Activated T-helper 2 cell treated with anti-CD3 and anti-CD28 coated beads, Interferon-gamma antibody, Interleukin-2, Interleukin-4, amounts not matched to agents 10 μg/mL and 5 μg/mL and 100 μg/mL, durations not matched to agents 14 hours and 24 hours and 36 hours (primary cell): ENCODE measurements at regions of chr16 and their contacts with region 1.

Region 1: GRCh38 chr16:78778101-78779004 is 678.9 kb downstream of the WWOX start:
- DNase-seq: peak; percentile 54
- H3K4me3 Mint-ChIP-seq: peak overlapping the region; percentile 58
- H3K27ac Mint-ChIP-seq: peak overlapping the region; percentile 91
- H3K4me1 Mint-ChIP-seq: peaks cover 61% of the 10 kb centered on the region
- H3K27me3 Mint-ChIP-seq: no peaks in the 10 kb centered on the region

Region 2: GRCh38 chr16:78794581-78795250 is 16.4 kb after region 1 on chr16:
- intact Hi-C with region 1: loop called (anchors 1 kb)
- DNase-seq: no peak
- H3K4me3 Mint-ChIP-seq: no peak overlapping the region
- H3K27ac Mint-ChIP-seq: peak overlapping the region; percentile 69
- H3K4me1 Mint-ChIP-seq: peaks cover 33% of the 10 kb centered on the region
- H3K27me3 Mint-ChIP-seq: no peaks in the 10 kb centered on the region

Region 3: GRCh38 chr16:78892951-78893733 is 114.8 kb after region 1 on chr16:
- intact Hi-C with region 1: loop called (anchors 1 kb)
- DNase-seq: no peak
- H3K4me3 Mint-ChIP-seq: no peak overlapping the region
- H3K27ac Mint-ChIP-seq: peak overlapping the region; percentile 34
- H3K4me1 Mint-ChIP-seq: peaks cover 27% of the 10 kb centered on the region
- H3K27me3 Mint-ChIP-seq: no peaks in the 10 kb centered on the region

Region 4: GRCh38 chr16:79008036-79008868 is 229.9 kb after region 1 on chr16:
- intact Hi-C with region 1: loop called (anchors 1 kb)
- DNase-seq: no peak
- H3K4me3 Mint-ChIP-seq: no peak overlapping the region
- H3K27ac Mint-ChIP-seq: peak overlapping the region; percentile 54
- H3K4me1 Mint-ChIP-seq: peaks cover 24% of the 10 kb centered on the region
- H3K27me3 Mint-ChIP-seq: no peaks in the 10 kb centered on the region

Region 5: GRCh38 chr16:79316004-79316458 is 537.7 kb after region 1 on chr16:
- intact Hi-C with region 1: loop called (anchors 1 kb)
- DNase-seq: peak; percentile 56
- H3K4me3 Mint-ChIP-seq: peak overlapping the region; percentile 42
- H3K27ac Mint-ChIP-seq: peak overlapping the region; percentile 89
- H3K4me1 Mint-ChIP-seq: peaks cover 44% of the 10 kb centered on the region
- H3K27me3 Mint-ChIP-seq: no peaks in the 10 kb centered on the region